ENCODE measurements at regions of chr18 and their contacts with region 1.

Region 1: GRCh38 chr18:50203801-50204604 is 9.1 kb upstream of the MYO5B start:
- DNase-seq: peak; percentile 47
- H3K4me3 Mint-ChIP-seq: peak overlapping the region; percentile 39
- H3K27ac Mint-ChIP-seq: no peak overlapping the region
- H3K4me1 Mint-ChIP-seq: peaks cover 10% of the 10 kb centered on the region
- H3K27me3 Mint-ChIP-seq: peaks cover 33% of the 10 kb centered on the region

Region 2: GRCh38 chr18:50111265-50111792 is 92.7 kb before region 1 on chr18:
- CTCF ChIA-PET with region 1: no interaction called
- intact Hi-C with region 1: loop called (anchors 5 kb)
- DNase-seq: no peak
- H3K4me3 Mint-ChIP-seq: no peak overlapping the region
- H3K27ac Mint-ChIP-seq: no peak overlapping the region
- H3K4me1 Mint-ChIP-seq: no peaks in the 10 kb centered on the region
- H3K27me3 Mint-ChIP-seq: peaks cover 20% of the 10 kb centered on the region

Region 3: DNA sequence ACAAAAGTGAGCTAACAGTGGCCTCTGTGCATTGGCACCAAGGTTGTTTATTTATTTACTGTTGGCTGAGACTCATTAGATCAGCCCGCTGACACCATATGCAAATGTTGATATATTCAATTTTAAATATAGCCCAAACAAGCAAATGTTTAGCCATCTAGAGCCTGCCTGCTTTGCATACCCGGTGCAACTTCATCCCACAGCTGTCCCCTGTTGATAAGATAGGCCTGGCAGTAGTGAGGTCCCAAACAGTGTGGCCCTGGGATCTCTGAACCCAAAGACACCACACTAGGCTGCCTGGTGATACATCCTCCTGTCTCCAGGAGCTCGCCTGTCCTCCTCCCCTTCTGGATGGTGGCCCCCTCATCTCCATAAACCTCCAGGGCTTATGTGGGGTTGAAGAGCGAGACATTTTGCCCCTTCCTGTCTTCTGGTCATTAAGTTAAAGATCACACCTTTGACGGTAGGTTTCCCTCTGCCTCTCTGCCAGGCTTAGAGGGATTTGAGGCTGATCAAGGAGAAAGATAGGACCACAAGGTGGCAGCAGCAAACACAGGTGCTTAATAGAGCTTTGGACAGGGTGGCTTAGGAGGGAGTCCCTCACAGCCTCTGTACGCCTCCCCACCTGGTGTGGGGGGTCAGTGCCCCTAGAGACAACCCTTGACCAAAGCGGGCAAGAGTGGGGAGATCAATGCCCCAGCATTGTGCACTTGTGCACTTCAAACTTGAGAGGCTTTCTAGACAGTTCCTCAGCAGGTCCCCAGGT is 14.6 kb after region 1 on chr18:
- CTCF ChIA-PET with region 1: interaction called, 10 read pairs
- intact Hi-C with region 1: no loop called
- DNase-seq: peak; percentile 59
- H3K4me3 Mint-ChIP-seq: no peak overlapping the region
- H3K27ac Mint-ChIP-seq: no peak overlapping the region
- H3K4me1 Mint-ChIP-seq: no peaks in the 10 kb centered on the region
- H3K27me3 Mint-ChIP-seq: peaks cover 18% of the 10 kb centered on the region

Measured in activated naive CD4-positive, alpha-beta T cell treated with anti-CD3 and anti-CD28 coated beads for 36 hours (primary cell).